HCT116 (cell line): ENCODE measurements at regions of chr16 and their contacts with region 1.

Region 1: GRCh38 chr16:24609740-24610415 is 70.5 kb downstream of the RBBP6 start:
- DNase-seq: no peak
- ATAC-seq: no peak
- H3K4me3 ChIP-seq: no peak overlapping the region
- H3K27ac ChIP-seq: no peak overlapping the region
- H3K4me1 ChIP-seq: no peaks in the 10 kb centered on the region
- H3K27me3 ChIP-seq: peaks cover 10% of the 10 kb centered on the region; the same call in 1 of the 2 replicates
- CTCF ChIP-seq: no peak
- POLR2A ChIP-seq: no peak
- RAD21 ChIP-seq: no peak

Region 2: DNA sequence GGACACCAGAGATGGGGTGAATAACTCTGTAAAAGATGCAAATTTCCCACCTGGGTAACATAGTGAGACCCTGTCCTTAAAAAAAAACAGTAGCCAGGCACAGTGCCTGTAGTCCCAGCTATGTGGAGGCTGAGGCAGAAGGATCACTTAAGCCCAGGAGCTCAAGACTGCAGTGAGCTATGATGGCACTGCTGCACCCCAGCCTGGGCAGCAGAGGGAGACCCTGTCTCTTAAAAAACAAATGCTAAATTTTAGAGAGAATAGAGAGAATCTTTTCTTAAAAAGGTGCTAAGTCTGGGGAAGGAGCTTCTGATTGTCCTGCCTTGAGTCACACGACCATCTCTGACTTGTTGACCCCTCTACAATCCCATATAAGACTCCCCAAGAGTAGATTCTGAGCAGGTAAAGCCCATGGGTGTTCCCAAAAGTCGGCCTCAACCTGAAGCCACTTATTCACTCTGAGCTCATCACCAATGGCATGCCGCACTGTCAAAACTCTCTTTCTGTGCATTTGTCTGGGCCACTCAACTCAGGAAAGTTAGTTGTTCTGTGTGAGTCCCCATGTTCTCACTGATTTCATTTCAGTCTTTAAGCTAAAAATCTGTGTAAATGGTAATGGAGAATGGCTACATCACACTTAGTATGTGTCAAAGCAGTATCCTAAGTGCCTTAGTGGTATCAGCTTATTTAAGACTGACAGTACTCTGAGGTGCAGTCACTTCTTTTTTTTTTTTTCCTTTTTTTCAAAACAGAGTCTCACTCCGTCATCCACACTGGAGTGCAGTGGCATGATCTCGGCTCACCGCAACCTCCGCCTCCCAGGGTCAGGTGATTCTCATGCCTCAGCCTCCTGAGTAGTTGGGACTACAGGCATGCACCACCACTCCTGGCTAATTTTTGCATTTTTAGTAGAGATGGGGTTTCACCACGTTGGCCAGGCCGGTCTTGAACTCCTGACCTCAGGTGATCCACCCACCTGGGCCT is 732.5 kb before region 1 on chr16:
- CTCF ChIA-PET with region 1: no interaction called
- POLR2A ChIA-PET with region 1: no interaction called
- RAD21 ChIA-PET with region 1: no interaction called
- intact Hi-C with region 1: no loop called
- DNase-seq: no peak
- ATAC-seq: no peak
- H3K4me3 ChIP-seq: no peak overlapping the region
- H3K27ac ChIP-seq: no peak overlapping the region
- H3K4me1 ChIP-seq: no peaks in the 10 kb centered on the region
- H3K27me3 ChIP-seq: peaks cover 29% of the 10 kb centered on the region
- CTCF ChIP-seq: no peak
- POLR2A ChIP-seq: no peak
- RAD21 ChIP-seq: no peak

Region 3: DNA sequence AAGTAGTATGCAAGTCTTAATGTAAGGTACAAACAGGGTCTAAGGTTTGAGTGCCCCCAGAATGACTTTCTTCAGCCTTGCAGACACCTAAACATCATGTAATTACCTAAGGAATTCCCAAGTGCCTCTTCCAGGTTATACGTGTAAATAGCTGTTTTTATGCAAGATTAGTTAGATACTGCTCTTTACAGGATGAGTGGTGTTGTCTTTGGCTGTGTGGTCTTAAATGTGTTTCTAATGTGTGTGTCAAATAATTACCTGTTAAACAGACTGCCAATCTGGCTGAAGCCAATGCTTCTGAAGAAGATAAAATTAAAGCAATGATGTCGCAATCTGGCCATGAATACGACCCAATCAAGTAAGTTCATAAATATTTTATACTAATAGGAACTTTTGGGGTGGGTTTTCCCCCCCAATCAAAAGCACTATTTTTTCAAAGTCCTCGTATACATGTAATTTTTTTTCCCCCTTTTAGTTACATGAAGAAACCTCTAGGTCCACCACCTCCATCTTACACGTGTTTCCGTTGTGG is 54.5 kb before region 1 on chr16:
- CTCF ChIA-PET with region 1: no interaction called
- POLR2A ChIA-PET with region 1: no interaction called
- RAD21 ChIA-PET with region 1: no interaction called
- intact Hi-C with region 1: loop called (anchors 5 kb)
- DNase-seq: no peak
- ATAC-seq: no peak
- H3K4me3 ChIP-seq: no peak overlapping the region
- H3K27ac ChIP-seq: no peak overlapping the region
- H3K4me1 ChIP-seq: no peaks in the 10 kb centered on the region
- H3K27me3 ChIP-seq: no peaks in the 10 kb centered on the region
- CTCF ChIP-seq: no peak
- POLR2A ChIP-seq: no peak
- RAD21 ChIP-seq: no peak